Dorsolateral prefrontal cortex (tissue), 120 donors: ENCODE measurements at regions of chr6 and their contacts with region 1.

Region 1: GRCh38 chr6:154500769-154501577 is 9.5 kb downstream of the CNKSR3 start:
- DNase-seq: peak in 1 of 10 donors; percentile 41
- H3K4me3 ChIP-seq: peak overlapping the region in 23 of 59 donors; percentile 1 to 40 (median 16)
- H3K27ac ChIP-seq: peak overlapping the region; percentile 52 to 98 (median 93)
- H3K27me3 ChIP-seq: no peaks in the 10 kb centered on the region
- CTCF ChIP-seq: peak; percentile 40 to 88 (median 70)

Region 2: DNA sequence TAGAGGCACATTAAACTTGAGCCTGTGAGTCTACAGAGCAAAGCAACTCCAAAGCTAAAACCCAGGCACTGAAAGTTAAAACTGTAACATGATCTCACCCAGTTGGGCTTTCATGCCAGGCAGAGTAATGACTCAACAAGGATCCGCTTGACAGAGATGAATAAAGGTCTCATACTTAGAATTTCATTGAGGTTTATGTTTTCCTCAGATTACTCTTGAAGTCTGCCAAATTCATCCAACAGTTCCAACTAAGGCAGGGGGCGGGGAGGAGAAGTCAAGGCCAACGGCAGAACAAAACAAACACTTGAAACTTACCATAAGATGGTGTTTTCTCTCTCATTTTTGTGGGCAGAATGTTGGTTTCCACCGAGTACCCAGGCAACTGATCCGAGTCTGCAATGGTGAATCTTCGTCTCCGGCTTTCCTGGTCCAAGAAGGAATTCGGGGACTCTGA is 90.3 kb before region 1 on chr6:
- intact Hi-C with region 1: loop called in 1 of 2 experiments (anchors 5 kb)
- DNase-seq: peak in 1 of 10 donors; percentile 29
- H3K4me3 ChIP-seq: peak overlapping the region in 1 of 59 donors; percentile 33
- H3K27ac ChIP-seq: peak overlapping the region in 58 of 59 donors; percentile 2 to 91 (median 78)
- H3K27me3 ChIP-seq: no peaks in the 10 kb centered on the region
- CTCF ChIP-seq: peak in 1 of 56 donors; percentile 12

Region 3: GRCh38 chr6:154450208-154450873 is 50.6 kb before region 1 on chr6:
- intact Hi-C with region 1: loop called in 1 of 2 experiments (anchors 5 kb)
- DNase-seq: no peak
- H3K4me3 ChIP-seq: no peak overlapping the region
- H3K27ac ChIP-seq: peak overlapping the region in 6 of 59 donors; percentile 4 to 86 (median 56)
- H3K27me3 ChIP-seq: no peaks in the 10 kb centered on the region
- CTCF ChIP-seq: no peak